ENCODE measurements at regions of chr4 and their contacts with region 1.

Region 1: DNA sequence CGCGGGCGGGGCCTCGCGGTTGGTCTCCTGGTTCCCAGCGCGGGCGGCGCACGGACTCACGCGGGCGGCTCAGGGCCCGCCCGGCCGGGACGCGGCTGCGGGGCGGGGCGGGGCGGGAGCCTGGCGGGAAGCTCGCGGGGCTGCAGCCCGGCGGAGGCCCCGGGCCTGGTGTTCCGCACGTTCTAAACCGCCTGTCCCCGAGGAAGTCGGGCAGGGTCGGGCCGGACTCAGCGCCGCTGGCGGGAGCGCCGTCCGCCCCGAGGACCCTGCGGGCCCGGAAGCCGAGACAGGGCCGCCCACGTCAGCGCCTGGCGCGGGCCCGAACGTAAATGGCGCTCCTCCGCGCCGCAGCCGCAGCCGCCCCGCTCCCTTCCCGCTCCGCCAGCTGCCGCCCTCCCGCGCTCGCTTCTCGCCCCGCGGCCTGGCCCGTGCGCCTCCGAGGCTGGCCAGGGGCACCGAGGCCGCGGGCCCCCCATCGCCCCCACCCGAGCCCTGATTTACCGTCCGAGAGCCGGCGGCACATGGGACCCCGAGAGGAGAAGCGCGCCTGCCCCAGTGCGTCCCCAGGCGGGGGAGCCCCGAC is 309 bp upstream of the CTBP1 start:
- DNase-seq: peak; percentile 75 to 91 (median 86)
- ATAC-seq: peak; percentile 64 to 69
- H3K4me3 Mint-ChIP-seq: peak overlapping the region; percentile 83 to 95 (median 90)
- H3K27ac Mint-ChIP-seq: peak overlapping the region; percentile 90 to 97 (median 95)
- H3K4me1 Mint-ChIP-seq: peaks cover 31 to 76% (median 70%) of the 10 kb centered on the region in 4 donors
- H3K27me3 Mint-ChIP-seq: no peaks in the 10 kb centered on the region

Region 2: DNA sequence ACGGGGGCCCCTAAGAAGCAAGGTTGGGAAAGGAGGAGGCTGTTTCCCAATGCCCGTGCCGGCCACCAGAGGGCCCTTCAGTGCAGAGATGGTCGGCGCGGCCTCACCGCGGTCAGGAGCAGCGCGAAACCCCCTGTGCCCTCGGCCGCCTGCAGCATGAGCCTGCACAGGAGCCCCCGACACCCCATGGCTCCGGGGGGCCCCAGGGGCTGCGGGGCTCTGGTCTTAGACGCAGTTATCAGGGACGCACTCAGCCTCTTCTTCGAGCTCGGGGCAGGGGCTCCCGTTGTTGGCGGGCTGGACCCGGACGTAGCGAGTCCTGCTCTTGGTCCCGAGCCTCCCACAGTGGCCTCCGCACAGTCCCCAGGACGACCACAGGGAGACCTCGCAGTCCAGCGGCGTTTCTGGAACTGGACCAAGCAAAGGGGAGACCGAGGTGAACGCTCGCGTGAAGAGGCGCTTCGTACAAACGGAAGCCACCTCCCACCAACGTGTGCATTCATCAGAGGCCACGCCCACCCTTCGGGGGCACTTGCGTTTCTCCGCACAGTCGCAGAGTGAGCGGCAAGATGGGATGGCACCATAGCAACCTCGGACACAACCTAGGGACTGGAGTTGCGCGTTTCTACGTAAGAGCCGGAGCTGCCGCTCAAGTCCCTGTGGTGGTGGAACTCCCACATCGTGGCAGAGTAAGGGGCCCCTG is 81.8 kb before region 1 on chr4:
- POLR2A ChIA-PET with region 1: interaction called, 27 read pairs
- DNase-seq: peak; percentile 80 to 94 (median 87)
- ATAC-seq: peak; percentile 84 to 87
- H3K4me3 Mint-ChIP-seq: peak overlapping the region; percentile 84 to 90 (median 87)
- H3K27ac Mint-ChIP-seq: peak overlapping the region; percentile 8 to 96 (median 92)
- H3K4me1 Mint-ChIP-seq: peaks cover 13 to 41% (median 29%) of the 10 kb centered on the region in 4 donors
- H3K27me3 Mint-ChIP-seq: peaks cover 2 to 11% (median 7%) of the 10 kb centered on the region in 5 donors

Region 3: DNA sequence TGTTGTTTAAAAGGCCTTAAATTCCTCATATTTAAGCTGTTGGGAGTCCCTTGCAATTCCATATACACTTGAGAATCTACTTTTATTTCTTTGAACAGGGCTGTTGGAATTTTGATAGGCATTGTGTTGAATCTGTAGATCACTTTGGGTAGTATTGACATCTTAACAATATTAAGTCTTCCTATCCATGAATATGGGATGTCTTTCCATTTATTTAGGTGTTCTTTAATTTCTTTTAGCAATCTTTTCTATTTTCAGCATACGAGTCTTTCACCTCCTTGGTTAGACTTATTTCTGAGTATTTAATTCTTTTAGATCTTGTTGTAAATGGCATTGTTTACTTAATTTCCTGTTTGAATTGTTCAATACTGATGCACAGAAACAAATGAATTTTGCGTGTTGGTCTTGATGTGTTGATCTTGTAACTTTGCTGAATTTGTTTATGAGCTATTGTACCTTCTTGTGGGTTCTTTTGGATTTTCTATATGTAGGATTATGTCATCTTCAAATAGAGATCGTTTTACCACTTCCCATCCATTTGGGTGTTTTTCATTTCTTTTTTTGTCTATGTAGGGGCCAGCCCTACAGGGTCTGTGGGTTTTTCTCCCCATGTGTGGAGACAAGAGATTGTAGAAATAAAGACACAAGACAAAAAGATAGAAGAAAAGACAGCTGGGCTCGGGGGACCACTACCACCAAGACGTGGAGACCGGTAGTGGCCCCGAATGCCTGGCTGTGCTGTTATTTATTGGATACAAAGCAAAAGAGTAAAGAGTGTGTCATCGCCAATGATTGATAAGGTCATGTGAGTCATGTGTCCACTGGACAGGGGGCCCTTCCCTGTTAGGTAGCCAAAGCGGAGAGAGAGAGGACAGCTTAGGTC is 17.9 kb after region 1 on chr4:
- POLR2A ChIA-PET with region 1: interaction called, 60 read pairs
- DNase-seq: peak in 4 of 10 donors; percentile 36 to 76 (median 59)
- ATAC-seq: peak; percentile 76 to 88
- H3K4me3 Mint-ChIP-seq: peak overlapping the region; percentile 76 to 89 (median 83)
- H3K27ac Mint-ChIP-seq: peak overlapping the region; percentile 83 to 99 (median 97)
- H3K4me1 Mint-ChIP-seq: peaks cover 11 to 26% (median 21%) of the 10 kb centered on the region in 4 donors
- H3K27me3 Mint-ChIP-seq: no peaks in the 10 kb centered on the region

Measured in naive thymus-derived CD8-positive, alpha-beta T cell (primary cell).